ENCODE measurements at regions of chr7 and their contacts with region 1.

Region 1: GRCh38 chr7:94313926-94314325 is 80.8 kb upstream of the COL1A2 start:
- DNase-seq: no peak
- H3K4me3 ChIP-seq: no peak overlapping the region
- H3K27ac ChIP-seq: no peak overlapping the region
- H3K4me1 ChIP-seq: no peaks in the 10 kb centered on the region
- H3K27me3 ChIP-seq: no peaks in the 10 kb centered on the region
- CTCF ChIP-seq: no peak
- POLR2A ChIP-seq: no peak

Region 2: GRCh38 chr7:94303695-94304094 is 10.2 kb before region 1 on chr7:
- intact Hi-C with region 1: loop called (anchors 1 kb)
- DNase-seq: no peak
- H3K4me3 ChIP-seq: no peak overlapping the region
- H3K27ac ChIP-seq: peak overlapping the region; percentile 94
- H3K4me1 ChIP-seq: peaks cover 31% of the 10 kb centered on the region
- H3K27me3 ChIP-seq: no peaks in the 10 kb centered on the region
- CTCF ChIP-seq: no peak
- POLR2A ChIP-seq: no peak

Region 3: GRCh38 chr7:94391726-94392392 is 77.9 kb after region 1 on chr7:
- intact Hi-C with region 1: no loop called
- DNase-seq: no peak
- H3K4me3 ChIP-seq: no peak overlapping the region
- H3K27ac ChIP-seq: peak overlapping the region; percentile 95
- H3K4me1 ChIP-seq: peaks cover 17% of the 10 kb centered on the region
- H3K27me3 ChIP-seq: no peaks in the 10 kb centered on the region
- CTCF ChIP-seq: no peak
- POLR2A ChIP-seq: no peak

Region 4: GRCh38 chr7:95749515-95749914 is 1435.6 kb after region 1 on chr7:
- intact Hi-C with region 1: loop called (anchors 5 kb)
- DNase-seq: no peak
- H3K4me3 ChIP-seq: no peak overlapping the region
- H3K27ac ChIP-seq: no peak overlapping the region
- H3K4me1 ChIP-seq: no peaks in the 10 kb centered on the region
- H3K27me3 ChIP-seq: no peaks in the 10 kb centered on the region
- CTCF ChIP-seq: no peak
- POLR2A ChIP-seq: no peak

Measured in vagina (tissue), 2 donors.